Heart left ventricle (tissue), 16 donors: ENCODE measurements at regions of chr2 and their contacts with region 1.

Region 1: DNA sequence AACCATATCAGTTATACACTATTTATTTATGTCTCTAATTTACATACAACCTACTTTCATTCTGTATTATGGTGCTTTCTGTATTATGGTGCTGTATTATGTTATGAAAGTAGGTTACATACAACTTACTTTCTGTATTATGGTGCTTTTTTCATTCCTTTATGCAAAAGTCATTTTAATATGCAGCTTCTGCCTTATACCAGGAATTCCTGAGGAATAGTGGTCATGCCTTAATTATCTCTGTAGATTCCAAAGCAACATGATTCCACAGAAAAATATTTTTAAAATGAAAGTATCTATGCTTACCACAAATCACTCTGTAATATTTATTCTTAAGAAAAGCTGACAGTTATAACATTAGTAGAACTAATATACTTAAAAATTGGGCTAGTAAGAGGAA is 922.0 kb upstream of the NRXN1 start:
- DNase-seq: no peak
- ATAC-seq: no peak
- H3K4me3 ChIP-seq: no peak overlapping the region
- H3K27ac ChIP-seq: no peak overlapping the region
- H3K4me1 ChIP-seq: no peaks in the 10 kb centered on the region
- H3K27me3 ChIP-seq: no peaks in the 10 kb centered on the region
- CTCF ChIP-seq: no peak
- POLR2A ChIP-seq: no peak

Region 2: GRCh38 chr2:51859263-51859662 is 94.7 kb before region 1 on chr2:
- intact Hi-C with region 1: no loop called
- DNase-seq: no peak
- ATAC-seq: no peak
- H3K4me3 ChIP-seq: no peak overlapping the region
- H3K27ac ChIP-seq: no peak overlapping the region
- H3K4me1 ChIP-seq: no peaks in the 10 kb centered on the region
- H3K27me3 ChIP-seq: no peaks in the 10 kb centered on the region
- CTCF ChIP-seq: no peak
- POLR2A ChIP-seq: no peak

Region 3: GRCh38 chr2:52022006-52022405 is 68.1 kb after region 1 on chr2:
- intact Hi-C with region 1: loop called in 1 of 10 experiments (anchors 5 kb)
- DNase-seq: no peak
- ATAC-seq: no peak
- H3K4me3 ChIP-seq: no peak overlapping the region
- H3K27ac ChIP-seq: no peak overlapping the region
- H3K4me1 ChIP-seq: no peaks in the 10 kb centered on the region
- H3K27me3 ChIP-seq: no peaks in the 10 kb centered on the region
- CTCF ChIP-seq: no peak
- POLR2A ChIP-seq: no peak

Region 4: GRCh38 chr2:52238782-52239181 is 284.9 kb after region 1 on chr2:
- intact Hi-C with region 1: no loop called
- DNase-seq: no peak
- ATAC-seq: no peak
- H3K4me3 ChIP-seq: no peak overlapping the region
- H3K27ac ChIP-seq: no peak overlapping the region
- H3K4me1 ChIP-seq: no peaks in the 10 kb centered on the region
- H3K27me3 ChIP-seq: no peaks in the 10 kb centered on the region
- CTCF ChIP-seq: no peak
- POLR2A ChIP-seq: no peak